Vagina (tissue), 2 donors: ENCODE measurements at regions of chr14 and their contacts with region 1.

Region 1: GRCh38 chr14:51155326-51155725 is 60.4 kb upstream of the TRIM9 start:
- DNase-seq: no peak
- H3K4me3 ChIP-seq: no peak overlapping the region
- H3K27ac ChIP-seq: no peak overlapping the region
- H3K4me1 ChIP-seq: no peaks in the 10 kb centered on the region
- H3K27me3 ChIP-seq: no peaks in the 10 kb centered on the region
- CTCF ChIP-seq: no peak
- POLR2A ChIP-seq: no peak

Region 2: GRCh38 chr14:51131496-51131895 is 23.8 kb before region 1 on chr14:
- intact Hi-C with region 1: loop called (anchors 2 kb)
- DNase-seq: no peak
- H3K4me3 ChIP-seq: no peak overlapping the region
- H3K27ac ChIP-seq: no peak overlapping the region
- H3K4me1 ChIP-seq: no peaks in the 10 kb centered on the region
- H3K27me3 ChIP-seq: no peaks in the 10 kb centered on the region
- CTCF ChIP-seq: no peak
- POLR2A ChIP-seq: no peak